Psoas muscle (tissue), 8 donors: ENCODE measurements at regions of chr1 and their contacts with region 1.

Region 1: DNA sequence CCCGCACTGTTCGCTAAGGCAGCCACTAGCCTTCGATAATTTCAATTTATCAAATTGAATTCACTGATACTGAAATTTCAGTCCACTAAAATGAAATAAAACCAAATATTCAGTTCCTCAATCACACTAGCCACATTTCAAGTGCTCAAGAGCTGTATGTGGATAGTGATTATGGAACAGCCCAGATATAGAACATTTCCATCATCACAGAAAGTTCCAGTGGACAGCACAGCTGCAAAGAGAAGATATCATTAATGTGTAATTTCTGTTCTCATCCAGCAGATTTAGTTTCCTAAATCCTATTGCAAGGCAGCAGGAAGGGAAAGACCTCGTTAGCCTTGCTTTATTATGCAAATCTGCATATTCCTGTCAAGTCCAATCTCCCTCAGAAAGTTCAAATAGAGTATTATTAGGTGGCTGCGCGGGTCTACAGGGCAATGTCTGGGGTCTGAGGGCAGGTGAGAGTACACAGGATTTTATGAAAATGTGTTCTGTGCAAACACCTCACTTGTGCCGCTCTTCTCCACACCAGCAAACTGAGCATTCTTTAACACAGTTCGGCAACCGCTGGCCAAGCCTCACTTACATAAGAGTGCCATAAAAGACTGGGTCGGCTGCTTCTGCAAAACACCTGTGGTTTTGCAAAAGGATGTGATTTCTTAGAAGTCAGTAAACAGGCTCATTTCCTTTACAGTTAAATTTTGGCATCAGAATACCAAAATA is 22.4 kb downstream of the CAPZB start:
- DNase-seq: no peak
- ATAC-seq: no peak
- H3K4me3 ChIP-seq: no peak overlapping the region
- H3K27ac ChIP-seq: peak overlapping the region; percentile 26
- H3K4me1 ChIP-seq: peaks cover 71% of the 10 kb centered on the region
- H3K27me3 ChIP-seq: no peaks in the 10 kb centered on the region
- CTCF ChIP-seq: no peak

Region 2: DNA sequence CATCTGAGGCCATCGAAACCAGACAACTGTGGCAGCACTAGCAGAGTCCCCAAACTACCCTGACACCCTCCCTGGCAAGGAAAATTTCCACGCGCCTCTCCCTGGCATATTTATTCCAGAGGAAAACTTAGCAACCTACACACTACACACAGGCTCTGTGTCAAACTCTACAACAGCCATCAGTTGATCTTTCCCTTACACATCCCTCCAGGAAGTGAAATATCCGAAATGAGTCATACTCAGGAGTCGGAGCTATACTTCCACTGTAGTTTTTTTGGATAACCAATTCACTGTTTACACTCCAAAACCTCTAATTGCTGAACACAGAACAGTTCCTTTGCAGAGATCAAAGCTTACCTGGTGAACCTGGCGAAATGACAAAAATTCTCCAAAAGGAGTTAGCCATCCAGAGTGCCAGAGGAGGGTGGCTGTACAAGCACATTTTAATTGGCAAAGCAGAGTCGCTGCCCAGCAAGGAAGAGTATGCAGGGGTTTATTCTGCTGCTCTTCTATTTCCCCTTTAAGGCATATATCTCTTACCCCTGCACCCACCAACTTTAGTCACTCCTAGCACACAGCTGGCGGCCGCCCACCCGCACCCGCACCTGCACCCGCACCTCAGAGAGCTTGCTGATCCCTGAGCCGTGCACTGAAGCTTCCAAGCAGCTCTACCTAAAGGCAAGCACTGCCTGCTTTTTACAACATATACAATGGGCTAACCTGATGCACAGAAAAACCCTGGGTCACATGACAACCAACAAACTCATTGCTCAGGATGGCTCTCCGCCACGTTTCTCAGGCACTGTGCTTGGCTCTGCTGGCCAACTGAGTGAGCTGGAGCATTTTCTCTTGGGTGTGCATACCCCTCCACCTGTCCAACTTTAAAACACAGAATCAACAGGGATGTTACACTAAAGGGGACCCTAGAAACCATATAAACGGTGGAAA is 32.5 kb before region 1 on chr1:
- intact Hi-C with region 1: no loop called
- DNase-seq: no peak
- ATAC-seq: peak in 2 of 4 donors; percentile 31 to 42
- H3K4me3 ChIP-seq: no peak overlapping the region
- H3K27ac ChIP-seq: peak overlapping the region; percentile 41
- H3K4me1 ChIP-seq: peaks cover 96% of the 10 kb centered on the region
- H3K27me3 ChIP-seq: no peaks in the 10 kb centered on the region
- CTCF ChIP-seq: no peak

Region 3: DNA sequence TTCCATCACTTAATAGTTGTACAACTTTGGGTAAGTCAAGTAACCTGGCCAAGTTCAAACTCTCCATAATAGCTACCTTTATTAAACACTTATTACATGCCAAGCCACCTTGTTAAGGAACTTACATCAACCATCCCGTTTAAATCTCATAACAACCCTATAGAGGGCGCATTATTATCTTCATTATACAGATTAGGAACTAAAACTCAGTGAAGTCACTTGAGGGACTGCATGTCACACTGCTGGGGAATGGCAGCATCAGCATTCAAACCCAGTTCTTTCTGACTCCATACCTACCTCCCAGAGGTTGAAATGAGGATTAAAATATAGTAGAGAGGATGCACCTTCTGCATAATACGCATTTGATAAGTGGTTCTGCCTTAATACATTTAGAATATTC is 770.5 kb after region 1 on chr1:
- intact Hi-C with region 1: loop called in 1 of 2 experiments (anchors 5 kb)
- DNase-seq: no peak
- ATAC-seq: no peak
- H3K4me3 ChIP-seq: no peak overlapping the region
- H3K27ac ChIP-seq: no peak overlapping the region
- H3K4me1 ChIP-seq: no peaks in the 10 kb centered on the region
- H3K27me3 ChIP-seq: peaks cover 0 to 19% (median 4%) of the 10 kb centered on the region in 3 donors
- CTCF ChIP-seq: peak; percentile 28